T-cell (primary cell): ENCODE measurements at regions of chr2 and their contacts with region 1.

Region 1: DNA sequence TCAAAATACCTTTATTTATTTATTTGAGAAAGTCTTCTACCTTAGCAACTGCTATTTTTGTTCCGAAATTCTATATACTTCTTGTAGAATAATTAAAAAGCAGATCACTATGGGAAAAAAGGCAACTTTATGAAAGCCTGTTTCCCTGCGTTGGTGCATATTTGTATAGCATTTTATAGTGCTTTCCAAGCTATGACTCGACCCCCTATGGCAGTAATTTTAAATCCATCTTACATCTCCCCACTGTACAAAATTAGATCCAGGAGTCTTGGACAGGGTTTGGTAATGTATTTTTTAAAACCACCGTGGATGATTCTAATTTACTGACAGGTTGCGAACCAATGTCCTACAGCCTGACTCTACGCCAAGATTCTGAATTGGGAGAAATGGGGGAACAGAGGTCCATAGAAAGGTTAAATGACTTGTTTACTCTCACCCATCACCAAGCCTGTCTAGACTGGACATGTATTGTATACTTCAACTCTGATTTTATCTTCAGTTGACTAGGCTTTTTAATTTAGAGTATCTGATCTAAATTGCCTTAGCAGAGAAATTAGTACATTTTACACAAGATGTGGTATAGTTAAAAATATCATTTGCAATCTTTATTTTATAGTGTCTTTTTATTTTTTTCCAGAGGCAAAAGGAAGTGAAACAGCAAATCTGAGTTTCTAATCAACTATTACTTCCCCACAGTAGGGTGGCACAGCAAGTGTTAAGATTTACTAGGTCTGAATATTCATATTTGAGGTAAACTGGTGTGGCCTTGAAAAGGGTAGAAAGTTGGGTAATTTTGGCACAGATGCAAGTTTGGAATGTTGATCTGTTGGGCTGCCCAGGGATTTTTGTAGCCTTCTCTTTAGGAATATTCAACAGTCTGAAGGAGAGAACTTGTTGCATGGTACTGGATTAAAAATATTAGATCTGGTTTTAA is 10.4 kb downstream of the TANK start:
- DNase-seq: no peak
- ATAC-seq: no peak
- H3K4me3 ChIP-seq: no peak overlapping the region
- H3K4me3 Mint-ChIP-seq: no peak overlapping the region
- H3K27ac ChIP-seq: no peak overlapping the region
- H3K27ac Mint-ChIP-seq: no peak overlapping the region
- H3K4me1 ChIP-seq: peaks cover 17 to 23% of the 10 kb centered on the region in 2 experiments
- H3K4me1 Mint-ChIP-seq: peaks cover 79 to 86% (median 80%) of the 10 kb centered on the region in 3 donors
- H3K27me3 ChIP-seq: no peaks in the 10 kb centered on the region
- H3K27me3 Mint-ChIP-seq: no peaks in the 10 kb centered on the region

Region 2: GRCh38 chr2:161335626-161336025 is 165.0 kb after region 1 on chr2:
- CTCF ChIA-PET with region 1: no interaction called
- POLR2A ChIA-PET with region 1: interaction called in 1 of 2 experiments, 10 read pairs
- DNase-seq: no peak
- ATAC-seq: no peak
- H3K4me3 ChIP-seq: no peak overlapping the region
- H3K4me3 Mint-ChIP-seq: no peak overlapping the region
- H3K27ac ChIP-seq: no peak overlapping the region
- H3K27ac Mint-ChIP-seq: no peak overlapping the region
- H3K4me1 ChIP-seq: no peaks in the 10 kb centered on the region
- H3K4me1 Mint-ChIP-seq: peaks cover 9 to 14% (median 13%) of the 10 kb centered on the region in 3 donors
- H3K27me3 ChIP-seq: no peaks in the 10 kb centered on the region
- H3K27me3 Mint-ChIP-seq: no peaks in the 10 kb centered on the region